ENCODE measurements at regions of chr9 and their contacts with region 1.

Region 1: DNA sequence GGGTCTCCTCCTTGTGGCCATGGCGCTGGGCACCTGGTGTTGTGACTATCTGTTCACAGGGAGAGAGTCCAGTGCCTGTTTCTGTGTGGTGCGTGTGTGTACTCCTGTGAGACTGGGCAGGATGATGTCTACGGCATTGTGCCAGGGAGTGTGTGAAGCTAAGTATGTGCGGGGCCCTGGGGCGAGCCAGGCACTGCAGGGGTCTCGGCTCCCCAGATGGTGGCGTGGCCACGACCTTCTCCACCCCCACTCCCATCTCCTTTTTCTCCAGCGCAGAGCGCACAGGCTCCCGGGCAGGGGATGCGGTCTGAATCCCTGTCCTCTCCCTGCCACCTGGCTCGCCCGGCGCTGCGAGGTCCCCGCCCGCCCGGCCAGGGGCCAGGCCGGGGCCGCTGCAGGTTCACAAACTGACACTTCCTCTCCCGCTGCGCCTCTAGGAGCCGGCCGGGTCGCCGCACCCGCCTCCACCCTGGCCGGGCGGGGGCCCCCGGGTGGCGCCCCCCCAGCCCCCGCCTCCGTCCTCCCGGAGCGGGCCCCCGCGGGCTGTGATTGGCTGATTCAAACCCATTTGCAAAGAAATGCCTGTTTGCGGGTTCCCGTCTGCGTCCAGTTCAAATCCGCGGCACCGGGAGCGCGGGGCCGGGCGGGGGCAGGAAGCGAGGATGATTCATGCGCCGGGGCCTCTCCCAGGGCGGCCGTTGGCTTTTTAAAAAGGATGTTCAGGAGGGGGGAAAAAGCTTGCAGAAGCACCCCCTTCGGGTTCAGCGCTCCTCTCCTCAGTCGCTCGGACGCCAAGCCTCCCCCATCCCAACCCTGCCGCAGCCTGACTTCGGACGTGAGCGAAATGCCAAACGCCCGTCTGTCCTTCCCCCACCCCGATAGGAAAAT is 790 bp downstream of the PHF19 start:
- DNase-seq: peak; percentile 85 to 87
- ATAC-seq: peak; percentile 66 to 82 (median 68)
- H3K4me3 ChIP-seq: peak overlapping the region; percentile 78
- H3K27ac ChIP-seq: peak overlapping the region; percentile 76
- H3K4me1 ChIP-seq: no peaks in the 10 kb centered on the region
- H3K27me3 ChIP-seq: peaks cover 0 to 20% (median 0%) of the 10 kb centered on the region in 3 donors
- CTCF ChIP-seq: no peak

Region 2: GRCh38 chr9:120919639-120920451 is 43.6 kb after region 1 on chr9:
- intact Hi-C with region 1: loop called in 1 of 2 experiments (anchors 5 kb)
- DNase-seq: no peak
- ATAC-seq: peak in 3 of 4 donors; percentile 57 to 78 (median 57)
- H3K4me3 ChIP-seq: no peak overlapping the region
- H3K27ac ChIP-seq: no peak overlapping the region
- H3K4me1 ChIP-seq: peaks cover 2% of the 10 kb centered on the region
- H3K27me3 ChIP-seq: no peaks in the 10 kb centered on the region
- CTCF ChIP-seq: no peak

Region 3: DNA sequence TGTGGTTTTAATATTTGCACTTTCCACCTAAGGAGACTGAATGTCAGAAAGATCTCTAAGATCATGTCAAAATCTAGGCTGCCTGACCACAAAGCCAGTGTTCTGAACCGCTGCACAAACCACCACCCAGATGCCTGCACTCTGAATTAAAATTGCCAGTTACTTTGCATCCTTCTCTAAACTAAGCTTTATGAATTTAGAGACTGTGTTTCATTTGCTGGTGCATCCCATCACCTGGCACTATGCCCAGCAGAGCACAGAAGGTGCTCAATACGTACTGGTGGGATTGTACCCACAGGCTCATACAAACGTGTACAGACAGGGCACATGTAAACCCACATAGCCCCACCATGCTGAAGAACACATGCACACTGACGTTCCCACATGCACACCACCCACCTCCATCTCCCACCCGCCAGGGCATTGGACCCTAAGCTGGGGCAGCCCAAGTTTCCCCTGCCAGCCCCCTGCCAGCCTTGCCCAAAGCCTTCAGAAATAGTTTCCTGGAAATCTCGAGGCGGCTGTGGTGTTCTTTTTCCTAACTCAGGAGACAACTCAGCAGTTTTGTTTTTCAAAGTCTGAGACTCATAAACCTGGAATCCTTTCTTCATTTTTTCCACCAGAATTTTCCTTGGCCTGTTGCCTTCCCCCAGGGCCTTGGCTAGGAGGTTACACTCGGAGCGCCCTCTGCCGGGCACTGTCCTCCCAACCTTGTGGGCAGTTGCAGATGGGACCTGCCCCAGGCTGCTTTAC is 60.0 kb after region 1 on chr9:
- intact Hi-C with region 1: loop called in 1 of 2 experiments (anchors 2 kb)
- DNase-seq: peak; percentile 92 to 96
- ATAC-seq: peak; percentile 87 to 94 (median 91)
- H3K4me3 ChIP-seq: no peak overlapping the region
- H3K27ac ChIP-seq: peak overlapping the region; percentile 51
- H3K4me1 ChIP-seq: peaks cover 17% of the 10 kb centered on the region
- H3K27me3 ChIP-seq: peaks cover 0 to 1% (median 0%) of the 10 kb centered on the region in 3 donors
- CTCF ChIP-seq: peak; percentile 89

Region 4: GRCh38 chr9:121138973-121139372 is 262.8 kb after region 1 on chr9:
- intact Hi-C with region 1: no loop called
- DNase-seq: no peak
- ATAC-seq: no peak
- H3K4me3 ChIP-seq: no peak overlapping the region
- H3K27ac ChIP-seq: no peak overlapping the region
- H3K4me1 ChIP-seq: no peaks in the 10 kb centered on the region
- H3K27me3 ChIP-seq: no peaks in the 10 kb centered on the region
- CTCF ChIP-seq: no peak

Measured in psoas muscle (tissue), 8 donors.